ENCODE measurements at regions of chr1 and their contacts with region 1.

Region 1: GRCh38 chr1:62746085-62746808 is 37.7 kb upstream of the ATG4C start:
- DNase-seq: peak; percentile 36
- H3K4me3 ChIP-seq: peak overlapping the region in 2 of 3 experiments; percentile 3 to 17
- H3K27ac ChIP-seq: no peak overlapping the region
- H3K4me1 ChIP-seq: no peaks in the 10 kb centered on the region
- H3K27me3 ChIP-seq: no peaks in the 10 kb centered on the region
- CTCF ChIP-seq: peak; percentile 48 to 51

Region 2: DNA sequence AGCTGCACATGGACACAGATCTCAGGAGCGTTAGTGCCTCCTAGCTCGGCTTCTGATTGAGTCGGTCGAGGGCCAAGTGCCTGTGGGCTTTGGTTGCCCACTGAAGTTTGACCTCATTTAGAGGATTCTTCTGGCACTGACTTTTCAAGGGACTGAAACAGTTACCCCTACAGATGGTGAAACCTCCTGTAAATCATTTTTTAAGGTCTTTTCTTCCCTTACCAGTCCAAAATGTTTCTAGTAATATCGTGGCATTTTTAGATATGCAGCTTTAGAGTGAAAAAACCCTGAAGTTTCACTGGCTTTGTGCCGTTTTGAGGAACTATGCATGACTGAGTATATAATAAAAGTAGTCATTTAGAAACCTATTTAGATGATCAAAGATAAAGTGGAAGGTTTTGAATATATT is 586.3 kb before region 1 on chr1:
- CTCF ChIA-PET with region 1: no interaction called
- dilution Hi-C with region 1: no loop called
- in situ Hi-C with region 1: loop called (anchors 25 kb)
- intact Hi-C with region 1: no loop called
- DNase-seq: no peak
- H3K4me3 ChIP-seq: no peak overlapping the region
- H3K27ac ChIP-seq: no peak overlapping the region
- H3K4me1 ChIP-seq: no peaks in the 10 kb centered on the region
- H3K27me3 ChIP-seq: no peaks in the 10 kb centered on the region
- CTCF ChIP-seq: no peak

Region 3: DNA sequence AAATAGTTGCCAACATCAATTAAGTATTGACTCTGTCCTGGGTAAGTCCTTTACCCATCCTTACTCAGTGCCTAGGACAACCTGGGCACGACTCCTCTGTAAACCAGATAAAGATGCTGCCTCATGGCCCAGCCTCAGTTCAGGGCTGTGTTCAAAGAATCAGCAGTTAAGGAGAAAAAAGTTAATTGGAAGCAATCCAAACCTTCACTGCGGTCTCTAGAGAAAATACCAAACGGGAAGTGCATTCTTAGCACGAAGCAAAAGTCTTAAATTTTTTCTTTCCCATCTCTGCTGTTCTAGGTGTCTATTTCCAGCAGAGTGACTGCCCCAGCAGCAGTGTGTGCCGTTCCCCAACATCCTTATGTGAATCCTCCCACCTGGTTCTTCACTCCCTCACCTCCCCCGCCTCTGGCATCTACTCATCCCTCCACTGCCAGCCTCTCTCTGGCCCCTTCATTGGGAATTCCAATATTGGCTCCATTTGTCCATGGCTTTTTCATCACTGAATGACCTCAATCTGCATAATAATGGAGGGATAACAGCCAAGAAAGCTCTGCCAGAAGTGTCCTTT is 450.2 kb before region 1 on chr1:
- CTCF ChIA-PET with region 1: no interaction called
- dilution Hi-C with region 1: no loop called
- in situ Hi-C with region 1: no loop called
- intact Hi-C with region 1: loop called (anchors 10 kb)
- DNase-seq: peak; percentile 62
- H3K4me3 ChIP-seq: peak overlapping the region in 1 of 3 experiments; percentile 12
- H3K27ac ChIP-seq: no peak overlapping the region
- H3K4me1 ChIP-seq: peaks cover 27% of the 10 kb centered on the region
- H3K27me3 ChIP-seq: no peaks in the 10 kb centered on the region
- CTCF ChIP-seq: no peak

Region 4: GRCh38 chr1:62436466-62437256 is 309.6 kb before region 1 on chr1 and contains the start of gene USP1:
- CTCF ChIA-PET with region 1: no interaction called
- dilution Hi-C with region 1: no loop called
- in situ Hi-C with region 1: no loop called
- intact Hi-C with region 1: loop called (anchors 10 kb)
- DNase-seq: peak; percentile 100
- H3K4me3 ChIP-seq: peak within 1 kb of the TSS; percentile 64 to 88 (median 76)
- H3K27ac ChIP-seq: peak within 1 kb of the TSS; percentile 98
- H3K4me1 ChIP-seq: peaks cover 8% of the 10 kb centered on the region
- H3K27me3 ChIP-seq: no peaks in the 10 kb centered on the region
- CTCF ChIP-seq: no peak
- total RNA-seq, gene USP1: 15.3 to 36.4 TPM

Region 5: GRCh38 chr1:62514746-62515423 is 231.4 kb before region 1 on chr1:
- CTCF ChIA-PET with region 1: no interaction called
- dilution Hi-C with region 1: no loop called
- in situ Hi-C with region 1: loop called in 1 of 2 experiments (anchors 10 kb)
- intact Hi-C with region 1: no loop called
- DNase-seq: peak; percentile 19
- H3K4me3 ChIP-seq: no peak overlapping the region
- H3K27ac ChIP-seq: no peak overlapping the region
- H3K4me1 ChIP-seq: no peaks in the 10 kb centered on the region
- H3K27me3 ChIP-seq: no peaks in the 10 kb centered on the region
- CTCF ChIP-seq: no peak

Region 6: GRCh38 chr1:62613325-62613727 is 132.9 kb before region 1 on chr1:
- CTCF ChIA-PET with region 1: no interaction called
- dilution Hi-C with region 1: no loop called
- in situ Hi-C with region 1: no loop called
- intact Hi-C with region 1: loop called (anchors 10 kb)
- DNase-seq: no peak
- H3K4me3 ChIP-seq: no peak overlapping the region
- H3K27ac ChIP-seq: no peak overlapping the region
- H3K4me1 ChIP-seq: no peaks in the 10 kb centered on the region
- H3K27me3 ChIP-seq: no peaks in the 10 kb centered on the region
- CTCF ChIP-seq: no peak

Region 7: GRCh38 chr1:62823556-62823955 is 77.3 kb after region 1 on chr1:
- CTCF ChIA-PET with region 1: interaction called, 13 read pairs
- dilution Hi-C with region 1: no loop called
- in situ Hi-C with region 1: no loop called
- intact Hi-C with region 1: no loop called
- DNase-seq: peak; percentile 21
- H3K4me3 ChIP-seq: no peak overlapping the region
- H3K27ac ChIP-seq: no peak overlapping the region
- H3K4me1 ChIP-seq: no peaks in the 10 kb centered on the region
- H3K27me3 ChIP-seq: no peaks in the 10 kb centered on the region
- CTCF ChIP-seq: no peak

Measured in mammary epithelial cell (primary cell).